ENCODE measurements at regions of chr4 and their contacts with region 1.

Region 1: GRCh38 chr4:87150498-87151261 is 69.7 kb downstream of the KLHL8 start:
- DNase-seq: peak; percentile 69 to 83 (median 76)
- H3K4me3 ChIP-seq: no peak overlapping the region
- H3K27ac ChIP-seq: no peak overlapping the region
- H3K4me1 ChIP-seq: no peaks in the 10 kb centered on the region
- H3K27me3 ChIP-seq: no peaks in the 10 kb centered on the region

Region 2: GRCh38 chr4:87196927-87197326 is 46.2 kb after region 1 on chr4:
- CTCF ChIA-PET with region 1: no interaction called
- POLR2A ChIA-PET with region 1: no interaction called
- DNase-seq: no peak
- H3K4me3 ChIP-seq: no peak overlapping the region
- H3K27ac ChIP-seq: no peak overlapping the region
- H3K4me1 ChIP-seq: no peaks in the 10 kb centered on the region
- H3K27me3 ChIP-seq: no peaks in the 10 kb centered on the region

Region 3: GRCh38 chr4:87220094-87220822 is 69.6 kb after region 1 on chr4 and contains the start of gene KLHL8:
- CTCF ChIA-PET with region 1: interaction called, 11 read pairs
- POLR2A ChIA-PET with region 1: interaction called, 6 read pairs
- DNase-seq: peak; percentile 87 to 94 (median 92)
- H3K4me3 ChIP-seq: peak within 1 kb of the TSS; percentile 78 to 99 (median 89)
- H3K27ac ChIP-seq: peak within 1 kb of the TSS; percentile 33 to 89
- H3K4me1 ChIP-seq: peaks cover 6 to 18% (median 15%) of the 10 kb centered on the region in 4 experiments
- H3K27me3 ChIP-seq: no peaks in the 10 kb centered on the region

Region 4: GRCh38 chr4:87235020-87235671 is 84.5 kb after region 1 on chr4:
- CTCF ChIA-PET with region 1: interaction called, 34 read pairs
- POLR2A ChIA-PET with region 1: no interaction called
- DNase-seq: no peak
- H3K4me3 ChIP-seq: peak overlapping the region in 5 of 7 experiments; percentile 51 to 86 (median 63)
- H3K27ac ChIP-seq: peak overlapping the region in 1 of 2 experiments; percentile 38
- H3K4me1 ChIP-seq: peaks cover under 1 to 5% (median 2%) of the 10 kb centered on the region in 4 experiments
- H3K27me3 ChIP-seq: no peaks in the 10 kb centered on the region

Region 5: DNA sequence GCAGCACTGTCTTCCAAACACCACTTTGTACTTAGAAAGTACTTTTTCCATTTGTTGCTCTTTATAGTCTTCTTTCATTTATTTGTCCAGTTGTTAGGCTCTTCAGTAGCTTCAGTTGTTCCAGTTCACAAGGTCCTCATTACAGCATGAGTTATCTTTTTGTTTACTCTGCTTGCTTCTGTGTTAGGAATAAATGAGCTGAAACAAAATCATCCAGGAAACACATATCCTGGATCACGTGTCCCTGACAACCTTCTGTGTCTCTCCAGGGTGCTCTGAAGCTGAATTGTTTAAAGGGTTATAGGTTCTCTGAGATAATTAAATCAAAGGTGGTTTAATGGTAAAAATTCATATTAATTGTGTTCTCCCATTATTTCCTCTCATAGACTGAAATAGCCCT is 89.7 kb after region 1 on chr4:
- CTCF ChIA-PET with region 1: interaction called, 34 read pairs
- POLR2A ChIA-PET with region 1: no interaction called
- DNase-seq: peak in 1 of 3 donors; percentile 9
- H3K4me3 ChIP-seq: no peak overlapping the region
- H3K27ac ChIP-seq: no peak overlapping the region
- H3K4me1 ChIP-seq: peaks cover 4 to 11% (median 7%) of the 10 kb centered on the region in 4 experiments
- H3K27me3 ChIP-seq: no peaks in the 10 kb centered on the region

Measured in common myeloid progenitor, CD34-positive (primary cell).